Heart left ventricle (tissue), 16 donors: ENCODE measurements at regions of chr10 and their contacts with region 1.

Region 1: DNA sequence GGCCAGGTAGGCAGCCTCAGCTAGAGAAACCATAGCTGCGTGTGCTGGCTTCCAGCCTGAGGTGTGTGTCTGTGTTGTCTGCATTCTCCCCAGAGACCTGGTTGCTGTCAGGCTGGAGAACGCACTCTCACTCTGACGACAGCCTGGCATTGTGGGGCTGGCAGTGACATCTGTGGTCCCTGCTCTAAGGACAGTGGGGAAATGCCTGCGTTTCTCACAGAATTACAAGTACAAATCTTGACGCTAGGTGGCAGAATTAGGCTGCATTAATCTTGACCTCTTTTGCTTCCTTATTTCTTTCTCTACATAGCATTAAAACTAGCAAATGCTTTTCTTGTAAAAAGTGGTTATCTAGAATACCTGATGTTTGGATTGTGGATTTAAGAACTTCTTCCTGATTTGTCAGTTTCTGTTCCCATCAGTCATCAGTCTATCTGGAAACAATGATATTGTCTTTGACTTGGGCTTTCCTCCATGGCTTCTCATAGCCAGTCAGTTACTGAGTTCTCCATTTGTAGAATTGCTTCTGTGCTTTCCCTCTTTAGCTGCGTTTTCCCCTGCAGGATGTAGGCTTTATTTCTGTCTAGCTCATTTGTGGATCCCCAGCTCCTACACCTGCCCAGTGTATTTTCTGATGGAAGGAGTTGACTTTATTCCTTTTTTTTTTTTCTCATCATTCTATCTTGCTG is 86.0 kb downstream of the FANK1 start:
- DNase-seq: peak in 1 of 5 donors; percentile 32
- ATAC-seq: peak in 3 of 4 donors; percentile 45 to 72 (median 62)
- H3K4me3 ChIP-seq: no peak overlapping the region
- H3K27ac ChIP-seq: no peak overlapping the region
- H3K4me1 ChIP-seq: no peaks in the 10 kb centered on the region
- H3K27me3 ChIP-seq: no peaks in the 10 kb centered on the region
- CTCF ChIP-seq: peak; percentile 50 to 86 (median 70)
- POLR2A ChIP-seq: no peak

Region 2: GRCh38 chr10:126090911-126091728 is 108.7 kb after region 1 on chr10:
- intact Hi-C with region 1: loop called in 2 of 10 experiments (anchors 5 kb)
- DNase-seq: peak in 1 of 5 donors; percentile 38
- ATAC-seq: peak in 1 of 4 donors; percentile 39
- H3K4me3 ChIP-seq: no peak overlapping the region
- H3K27ac ChIP-seq: no peak overlapping the region
- H3K4me1 ChIP-seq: peaks cover 0 to 22% (median 0%) of the 10 kb centered on the region in 12 donors
- H3K27me3 ChIP-seq: no peaks in the 10 kb centered on the region
- CTCF ChIP-seq: no peak
- POLR2A ChIP-seq: no peak

Region 3: DNA sequence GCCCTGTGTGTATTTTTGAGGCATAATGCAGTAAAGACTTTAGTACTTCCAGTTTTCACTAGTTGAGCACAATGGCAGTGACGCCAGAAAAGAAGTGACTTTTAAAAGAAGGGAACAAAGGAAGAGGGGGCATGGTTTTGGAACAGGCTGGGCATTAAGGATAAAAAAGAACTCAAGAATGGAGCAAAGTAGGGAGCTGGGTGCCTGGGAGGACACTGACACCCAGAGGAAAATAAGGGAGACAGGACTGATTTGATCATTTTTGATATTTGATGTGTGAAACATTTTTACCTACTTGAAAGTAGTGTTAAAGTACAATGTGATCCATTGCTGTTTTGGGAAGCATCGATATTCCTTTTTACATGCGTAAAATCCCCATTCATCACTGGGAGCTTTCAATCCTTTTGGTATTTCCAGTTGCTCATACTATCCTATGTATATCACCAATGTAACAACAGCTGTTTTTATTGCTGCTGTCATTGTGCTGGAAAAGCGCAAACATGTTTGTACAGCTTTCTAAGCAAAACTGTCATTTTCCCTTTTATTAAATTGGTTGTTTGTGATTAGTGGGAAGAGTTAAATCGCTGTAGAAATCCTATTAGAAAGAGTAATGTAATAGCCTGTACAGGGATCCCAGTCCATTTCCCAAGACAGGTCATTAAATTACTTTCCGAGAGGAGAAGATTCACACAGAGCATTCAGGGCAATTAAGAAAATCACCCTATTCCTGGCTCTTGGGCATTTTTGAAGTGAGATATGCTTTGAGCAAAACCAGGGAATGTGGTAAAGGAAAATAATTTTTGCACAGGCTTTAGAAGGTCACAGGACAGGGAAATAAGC is 320.6 kb after region 1 on chr10:
- intact Hi-C with region 1: loop called in 6 of 10 experiments (anchors 5 to 10 kb)
- DNase-seq: no peak
- ATAC-seq: no peak
- H3K4me3 ChIP-seq: no peak overlapping the region
- H3K27ac ChIP-seq: no peak overlapping the region
- H3K4me1 ChIP-seq: no peaks in the 10 kb centered on the region
- H3K27me3 ChIP-seq: peaks cover 0 to 2% (median 0%) of the 10 kb centered on the region in 9 donors
- CTCF ChIP-seq: peak in 7 of 12 donors; percentile 10 to 41 (median 31)
- POLR2A ChIP-seq: no peak

Region 4: DNA sequence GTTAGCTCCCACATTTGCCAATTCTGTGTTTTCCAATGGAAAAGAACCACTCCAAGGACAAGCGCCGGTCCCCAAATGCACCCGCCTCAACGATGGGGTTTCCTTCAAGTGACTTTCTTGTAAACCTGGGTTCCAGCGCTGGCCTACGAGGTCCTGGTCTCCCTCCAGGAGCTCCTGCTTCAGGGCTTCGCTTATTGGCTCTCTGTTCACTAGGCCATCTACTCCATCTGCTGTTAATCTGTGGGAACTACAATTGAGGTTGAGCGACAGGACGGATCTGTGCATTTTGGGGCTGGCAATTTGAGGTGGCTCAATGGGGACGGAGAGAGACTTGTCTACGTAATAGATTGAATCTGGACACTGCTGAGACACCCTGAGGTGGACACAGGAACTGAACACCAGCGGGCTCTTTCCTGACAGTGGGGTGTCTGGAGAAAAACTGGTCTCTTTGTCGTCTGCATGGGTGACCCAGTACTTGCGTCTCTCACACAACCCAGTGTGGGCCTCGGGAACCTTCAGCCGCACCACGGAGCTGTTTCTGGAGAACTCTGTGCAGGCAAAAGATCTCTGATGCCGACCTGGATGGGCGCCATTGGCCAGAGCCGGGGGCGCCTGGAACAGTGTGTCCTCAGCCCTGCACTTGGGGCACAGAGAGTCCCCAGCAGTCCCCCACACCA is 521.8 kb after region 1 on chr10:
- intact Hi-C with region 1: loop called (anchors 1 to 5 kb)
- DNase-seq: peak in 2 of 5 donors; percentile 23 to 31
- ATAC-seq: peak in 3 of 4 donors; percentile 64 to 70 (median 69)
- H3K4me3 ChIP-seq: no peak overlapping the region
- H3K27ac ChIP-seq: no peak overlapping the region
- H3K4me1 ChIP-seq: no peaks in the 10 kb centered on the region
- H3K27me3 ChIP-seq: peaks cover 0 to 11% (median 0%) of the 10 kb centered on the region in 9 donors
- CTCF ChIP-seq: peak; percentile 41 to 79 (median 58)
- POLR2A ChIP-seq: no peak

Region 5: GRCh38 chr10:127853868-127854768 is 1871.7 kb after region 1 on chr10:
- intact Hi-C with region 1: loop called in 3 of 10 experiments (anchors 5 to 10 kb)
- DNase-seq: peak; percentile 59 to 84 (median 68)
- ATAC-seq: peak; percentile 72 to 94 (median 92)
- H3K4me3 ChIP-seq: no peak overlapping the region
- H3K27ac ChIP-seq: no peak overlapping the region
- H3K4me1 ChIP-seq: peaks cover 0 to 9% (median 0%) of the 10 kb centered on the region in 12 donors
- H3K27me3 ChIP-seq: peaks cover 0 to 17% (median 0%) of the 10 kb centered on the region in 9 donors
- CTCF ChIP-seq: peak; percentile 74 to 93 (median 84)
- POLR2A ChIP-seq: no peak